Caco-2 (cell line): ENCODE measurements at regions of chr10 and their contacts with region 1.

Region 1: GRCh38 chr10:118259288-118259906 is 82.7 kb downstream of the FAM204A start:
- DNase-seq: peak; percentile 58 to 67
- H3K4me3 ChIP-seq: no peak overlapping the region
- H3K4me3 Mint-ChIP-seq: no peak overlapping the region
- H3K27ac Mint-ChIP-seq: no peak overlapping the region
- H3K4me1 ChIP-seq: no peaks in the 10 kb centered on the region
- H3K4me1 Mint-ChIP-seq: peaks cover 7% of the 10 kb centered on the region
- H3K27me3 ChIP-seq: no peaks in the 10 kb centered on the region; the same call in 1 of the 2 replicates
- H3K27me3 Mint-ChIP-seq: peaks cover 27% of the 10 kb centered on the region
- CTCF ChIP-seq: peak; percentile 75 to 76

Region 2: DNA sequence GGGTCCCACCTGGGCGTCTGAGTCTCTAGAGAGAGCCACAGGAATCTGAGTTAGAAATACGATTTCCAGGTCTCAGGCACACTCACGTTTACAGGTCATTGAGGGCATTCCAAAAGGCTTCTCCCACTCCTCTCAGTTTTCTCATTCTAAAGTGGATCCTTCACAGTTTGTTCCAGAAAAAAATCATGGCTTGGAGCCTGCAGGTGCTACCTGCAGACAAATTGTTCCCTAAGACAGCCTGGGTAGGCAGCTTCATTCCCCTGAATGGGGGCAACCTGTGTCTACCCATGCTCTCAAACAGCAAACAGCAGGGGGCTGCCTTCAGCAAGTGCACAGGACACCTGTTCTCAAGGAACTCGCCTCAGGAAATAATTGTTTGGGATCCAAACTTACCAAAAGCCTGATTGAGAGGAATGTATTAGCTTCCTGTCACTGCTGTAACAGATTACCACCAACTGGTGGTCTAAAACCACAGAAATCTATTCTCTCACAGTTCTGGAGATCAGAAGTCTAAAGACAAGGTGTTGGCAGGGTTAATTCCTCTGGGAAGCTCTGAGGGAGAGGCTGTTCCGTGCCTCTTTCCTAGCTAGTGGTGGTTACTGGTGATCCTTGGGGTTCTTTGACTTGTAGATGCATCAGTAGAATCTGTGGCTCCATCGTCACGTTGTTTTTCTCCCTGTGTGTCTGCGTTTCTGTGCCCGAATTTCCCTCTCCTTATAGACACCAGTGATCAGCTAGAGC is 329.9 kb before region 1 on chr10:
- CTCF ChIA-PET with region 1: interaction called, 4 read pairs
- POLR2A ChIA-PET with region 1: no interaction called
- intact Hi-C with region 1: loop called (anchors 1 kb)
- DNase-seq: peak in 1 of 2 experiments; percentile 34
- H3K4me3 ChIP-seq: no peak overlapping the region
- H3K4me3 Mint-ChIP-seq: no peak overlapping the region
- H3K27ac Mint-ChIP-seq: no peak overlapping the region
- H3K4me1 ChIP-seq: no peaks in the 10 kb centered on the region
- H3K4me1 Mint-ChIP-seq: no peaks in the 10 kb centered on the region
- H3K27me3 ChIP-seq: no peaks in the 10 kb centered on the region
- H3K27me3 Mint-ChIP-seq: peaks cover 12% of the 10 kb centered on the region
- CTCF ChIP-seq: peak; percentile 26 to 55